Natural killer cell (primary cell): ENCODE measurements at regions of chr13 and their contacts with region 1.

Region 1: GRCh38 chr13:30679483-30680330 is 55.6 kb upstream of the ALOX5AP start:
- DNase-seq: peak in 1 of 2 donors; percentile 65
- ATAC-seq: peak; percentile 75 to 95 (median 94)
- H3K4me3 ChIP-seq: no peak overlapping the region
- H3K4me3 Mint-ChIP-seq: no peak overlapping the region
- H3K27ac ChIP-seq: no peak overlapping the region
- H3K27ac Mint-ChIP-seq: peak overlapping the region in 1 of 2 donors; percentile 8
- H3K4me1 ChIP-seq: no peaks in the 10 kb centered on the region
- H3K4me1 Mint-ChIP-seq: peaks cover 13% of the 10 kb centered on the region in 2 donors
- H3K27me3 ChIP-seq: no peaks in the 10 kb centered on the region
- H3K27me3 Mint-ChIP-seq: no peaks in the 10 kb centered on the region
- CTCF ChIP-seq: peak; percentile 56

Region 2: GRCh38 chr13:30257468-30258099 is 422.1 kb before region 1 on chr13:
- intact Hi-C with region 1: no loop called
- DNase-seq: no peak
- ATAC-seq: no peak
- H3K4me3 ChIP-seq: no peak overlapping the region
- H3K4me3 Mint-ChIP-seq: no peak overlapping the region
- H3K27ac ChIP-seq: no peak overlapping the region
- H3K27ac Mint-ChIP-seq: no peak overlapping the region
- H3K4me1 ChIP-seq: no peaks in the 10 kb centered on the region
- H3K4me1 Mint-ChIP-seq: peaks cover 4 to 8% of the 10 kb centered on the region in 2 donors
- H3K27me3 ChIP-seq: no peaks in the 10 kb centered on the region
- H3K27me3 Mint-ChIP-seq: no peaks in the 10 kb centered on the region
- CTCF ChIP-seq: no peak

Region 3: GRCh38 chr13:30346153-30346788 is 333.4 kb before region 1 on chr13:
- intact Hi-C with region 1: no loop called
- DNase-seq: peak in 1 of 2 donors; percentile 73
- ATAC-seq: peak; percentile 70 to 83 (median 80)
- H3K4me3 ChIP-seq: no peak overlapping the region
- H3K4me3 Mint-ChIP-seq: peak overlapping the region; percentile 78
- H3K27ac ChIP-seq: no peak overlapping the region
- H3K27ac Mint-ChIP-seq: peak overlapping the region; percentile 66 to 70
- H3K4me1 ChIP-seq: peaks cover 31% of the 10 kb centered on the region
- H3K4me1 Mint-ChIP-seq: peaks cover 38 to 41% of the 10 kb centered on the region in 2 donors
- H3K27me3 ChIP-seq: no peaks in the 10 kb centered on the region
- H3K27me3 Mint-ChIP-seq: no peaks in the 10 kb centered on the region
- CTCF ChIP-seq: no peak

Region 4: GRCh38 chr13:30600496-30600895 is 79.2 kb before region 1 on chr13:
- intact Hi-C with region 1: no loop called
- DNase-seq: no peak
- ATAC-seq: no peak
- H3K4me3 ChIP-seq: no peak overlapping the region
- H3K4me3 Mint-ChIP-seq: no peak overlapping the region
- H3K27ac ChIP-seq: no peak overlapping the region
- H3K27ac Mint-ChIP-seq: no peak overlapping the region
- H3K4me1 ChIP-seq: no peaks in the 10 kb centered on the region
- H3K4me1 Mint-ChIP-seq: peaks cover 0 to 9% of the 10 kb centered on the region in 2 donors
- H3K27me3 ChIP-seq: peaks cover 2% of the 10 kb centered on the region
- H3K27me3 Mint-ChIP-seq: peaks cover 0 to 7% of the 10 kb centered on the region in 2 donors
- CTCF ChIP-seq: no peak

Region 5: DNA sequence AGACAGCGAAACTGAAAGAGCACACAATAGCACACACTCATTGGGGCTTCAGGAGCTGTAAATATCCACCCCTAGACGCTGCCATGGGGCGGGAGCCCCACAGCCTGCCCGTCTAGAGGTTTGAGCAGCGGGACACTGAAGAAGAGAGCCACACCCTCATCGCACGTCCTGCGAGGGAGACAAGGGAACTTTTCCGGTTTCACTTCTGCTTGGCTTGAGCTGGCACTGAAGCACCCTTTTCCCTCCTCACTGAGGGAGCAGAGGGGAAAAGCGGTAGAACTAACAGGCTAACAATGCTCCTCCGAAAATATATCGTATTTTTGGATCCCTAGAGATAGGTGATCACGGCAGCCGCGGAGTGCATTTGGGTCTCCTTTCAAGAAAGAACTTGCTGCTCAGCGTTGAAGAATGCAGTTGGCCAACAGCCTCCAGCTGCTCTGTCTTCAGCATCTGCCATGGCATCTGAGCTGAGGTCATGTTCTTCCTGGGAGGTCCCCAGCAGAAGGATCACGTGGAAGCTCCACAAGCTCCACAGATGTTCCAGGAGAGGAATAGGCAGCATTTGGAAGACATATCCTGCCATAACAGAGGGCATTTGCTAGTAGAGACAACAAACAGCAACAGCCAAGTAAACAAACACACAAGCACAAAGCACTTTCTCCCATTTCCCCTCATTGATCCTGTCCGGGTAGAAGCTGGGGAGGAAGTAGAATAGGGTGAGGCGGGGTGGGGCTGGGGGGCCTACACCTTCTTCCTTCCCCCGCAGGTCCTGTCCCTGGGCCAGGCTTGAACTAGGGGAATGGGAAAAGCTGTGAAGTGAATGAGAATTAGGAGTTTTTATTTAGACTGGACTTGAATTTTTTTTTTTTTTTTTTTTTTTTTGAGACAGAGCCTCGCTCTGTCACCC is 10.8 kb after region 1 on chr13:
- intact Hi-C with region 1: no loop called
- DNase-seq: peak in 1 of 2 donors; percentile 46
- ATAC-seq: peak; percentile 82 to 91 (median 82)
- H3K4me3 ChIP-seq: peak overlapping the region; percentile 9
- H3K4me3 Mint-ChIP-seq: peak overlapping the region; percentile 83
- H3K27ac ChIP-seq: peak overlapping the region; percentile 17
- H3K27ac Mint-ChIP-seq: peak overlapping the region; percentile 79 to 87
- H3K4me1 ChIP-seq: peaks cover 14% of the 10 kb centered on the region
- H3K4me1 Mint-ChIP-seq: peaks cover 32 to 43% of the 10 kb centered on the region in 2 donors
- H3K27me3 ChIP-seq: no peaks in the 10 kb centered on the region
- H3K27me3 Mint-ChIP-seq: peaks cover 0 to 2% of the 10 kb centered on the region in 2 donors
- CTCF ChIP-seq: no peak

Region 6: DNA sequence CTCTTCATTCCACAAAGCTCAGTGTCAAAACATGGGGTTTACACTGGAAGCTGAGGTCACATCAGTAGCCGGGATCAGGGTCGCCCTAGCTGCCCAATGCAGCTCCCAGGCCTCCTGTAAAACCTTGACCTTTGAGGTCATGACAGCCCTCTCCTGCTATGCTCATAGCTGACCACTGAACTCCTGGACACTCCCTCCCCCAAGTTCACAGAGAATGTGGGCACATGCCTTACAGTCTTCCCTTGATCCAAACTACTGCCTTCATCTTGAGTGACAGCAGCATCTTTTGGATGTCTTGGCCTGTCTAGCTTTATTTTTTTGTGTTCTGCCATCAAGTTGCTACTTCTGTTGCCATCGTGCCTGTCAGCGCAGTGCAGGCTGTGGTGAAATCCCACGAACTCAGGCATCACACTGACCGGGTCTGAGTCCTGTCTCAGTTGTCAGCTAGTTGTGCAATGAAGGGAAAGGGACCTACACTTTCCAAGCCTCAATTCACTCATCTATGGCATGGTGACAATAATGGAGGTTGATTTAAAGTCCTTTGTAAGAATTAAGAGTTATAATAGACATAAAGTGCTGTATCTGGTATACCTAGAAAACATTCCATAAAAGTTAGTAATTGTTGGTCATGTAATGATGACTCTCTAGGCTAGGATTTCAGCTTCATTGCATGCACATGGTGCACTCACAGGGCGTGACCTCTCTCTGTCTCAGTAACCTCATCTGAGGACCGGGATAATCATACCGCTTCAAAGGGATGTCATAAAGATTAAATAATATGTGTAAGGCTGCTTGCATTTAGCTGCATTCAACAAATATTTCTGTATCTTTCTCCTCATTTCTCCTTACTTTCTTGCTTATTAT is 39.2 kb after region 1 on chr13:
- intact Hi-C with region 1: loop called (anchors 5 kb)
- DNase-seq: no peak
- ATAC-seq: no peak
- H3K4me3 ChIP-seq: no peak overlapping the region
- H3K4me3 Mint-ChIP-seq: no peak overlapping the region
- H3K27ac ChIP-seq: no peak overlapping the region
- H3K27ac Mint-ChIP-seq: no peak overlapping the region
- H3K4me1 ChIP-seq: peaks cover 18% of the 10 kb centered on the region
- H3K4me1 Mint-ChIP-seq: peaks cover 26 to 40% of the 10 kb centered on the region in 2 donors
- H3K27me3 ChIP-seq: no peaks in the 10 kb centered on the region
- H3K27me3 Mint-ChIP-seq: no peaks in the 10 kb centered on the region
- CTCF ChIP-seq: no peak